ENCODE measurements at regions of chr12 and their contacts with region 1.

Region 1: DNA sequence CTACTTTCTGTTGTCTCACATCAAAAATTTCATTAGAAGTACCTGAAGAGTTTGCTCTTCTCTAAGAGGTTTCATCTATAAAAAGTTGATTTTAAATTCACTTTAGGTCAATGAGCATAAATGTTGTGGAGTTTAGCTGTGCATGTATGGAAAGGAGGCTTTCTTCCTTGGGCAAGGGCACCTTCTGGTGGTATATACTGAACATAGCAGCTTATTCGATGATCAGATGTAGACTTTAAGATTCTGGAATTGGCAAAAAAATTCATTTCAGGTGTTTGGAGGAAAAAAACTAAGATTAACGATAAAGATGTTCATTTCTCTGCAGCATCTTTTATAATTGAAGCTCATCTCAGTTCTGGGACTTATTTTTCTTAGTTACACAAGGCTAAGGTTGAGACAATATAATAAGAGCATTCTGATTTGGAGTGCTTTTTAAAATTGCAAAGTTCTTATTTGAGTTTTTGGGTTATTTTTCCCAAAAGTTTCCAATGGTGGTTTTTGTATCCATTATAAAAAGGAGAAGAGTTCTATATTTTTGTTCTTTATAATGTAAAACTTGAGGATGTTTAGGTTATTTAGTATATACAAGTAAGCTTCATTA is 46.8 kb downstream of the TMEM117 start:
- DNase-seq: peak; percentile 56
- H3K4me3 ChIP-seq: no peak overlapping the region; a peak in 1 of 4 replicates
- H3K27ac ChIP-seq: peak overlapping the region in 1 of 2 experiments; percentile 61; a peak in 1 of 4 replicates
- H3K4me1 ChIP-seq: no peaks in the 10 kb centered on the region; a peak in 1 of 4 replicates
- H3K27me3 ChIP-seq: no peaks in the 10 kb centered on the region
- CTCF ChIP-seq: peak; percentile 91
- EP300 ChIP-seq: no peak
- RAD21 ChIP-seq: peak; percentile 99

Region 2: DNA sequence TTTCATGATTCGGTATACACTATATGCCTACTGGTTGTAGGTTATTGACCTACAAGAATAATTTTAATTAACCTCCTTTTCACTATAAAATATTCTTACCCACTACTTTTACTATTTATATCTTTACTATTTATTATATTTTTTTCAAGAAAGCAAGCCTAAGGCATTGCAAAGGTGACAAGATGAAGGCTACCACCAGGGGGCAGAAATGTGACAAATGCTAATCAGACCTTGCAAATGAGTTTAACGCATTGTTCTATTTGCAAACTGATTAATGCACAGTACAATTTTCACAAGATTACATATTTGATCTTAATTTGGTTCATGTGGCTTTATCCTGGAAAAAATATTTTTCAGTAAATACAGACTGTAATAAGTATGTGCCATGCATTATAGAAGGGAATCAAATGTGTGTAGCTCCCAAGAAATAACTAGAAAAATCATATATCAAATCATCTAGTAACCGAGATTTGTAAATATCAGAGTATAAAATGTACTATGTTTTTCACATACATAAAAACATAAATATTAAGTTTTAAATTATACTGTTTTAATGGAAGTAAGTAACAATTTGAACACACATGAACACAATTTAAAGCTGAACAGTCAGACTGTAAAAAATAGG is 437.6 kb before region 1 on chr12:
- CTCF ChIA-PET with region 1: interaction called, 12 read pairs
- POLR2A ChIA-PET with region 1: no interaction called
- DNase-seq: peak; percentile 10
- H3K4me3 ChIP-seq: no peak overlapping the region
- H3K27ac ChIP-seq: no peak overlapping the region
- H3K4me1 ChIP-seq: no peaks in the 10 kb centered on the region; a peak in 1 of 4 replicates
- H3K27me3 ChIP-seq: no peaks in the 10 kb centered on the region
- CTCF ChIP-seq: peak; percentile 88
- EP300 ChIP-seq: no peak
- RAD21 ChIP-seq: peak; percentile 61

Region 3: DNA sequence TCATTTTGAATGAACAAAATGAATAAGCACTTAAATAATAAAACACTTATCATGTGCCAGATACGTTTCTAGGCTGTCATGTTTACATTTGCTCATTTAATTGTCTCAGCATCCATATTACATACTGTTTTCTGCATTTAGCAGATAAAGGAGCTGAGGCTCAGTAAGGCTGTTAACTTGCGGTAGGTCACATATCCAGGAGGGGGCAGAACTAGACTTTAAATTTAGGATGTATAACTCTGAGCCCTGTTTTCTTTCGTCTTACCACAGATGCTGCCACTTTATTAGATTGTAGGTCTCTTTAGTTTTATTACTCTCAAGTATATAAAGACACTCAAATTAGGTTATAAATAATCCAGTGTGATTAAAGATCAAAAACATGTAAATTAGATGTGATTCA is 106.2 kb before region 1 on chr12:
- CTCF ChIA-PET with region 1: interaction called, 87 read pairs
- POLR2A ChIA-PET with region 1: no interaction called
- DNase-seq: peak; percentile 61
- H3K4me3 ChIP-seq: no peak overlapping the region
- H3K27ac ChIP-seq: no peak overlapping the region
- H3K4me1 ChIP-seq: no peaks in the 10 kb centered on the region
- H3K27me3 ChIP-seq: no peaks in the 10 kb centered on the region
- CTCF ChIP-seq: peak; percentile 61
- EP300 ChIP-seq: no peak
- RAD21 ChIP-seq: peak; percentile 72

Region 4: GRCh38 chr12:43795716-43796288 is 86.9 kb before region 1 on chr12:
- CTCF ChIA-PET with region 1: interaction called, 15 read pairs
- POLR2A ChIA-PET with region 1: no interaction called
- DNase-seq: no peak
- H3K4me3 ChIP-seq: no peak overlapping the region
- H3K27ac ChIP-seq: peak overlapping the region in 1 of 2 experiments; percentile 21; a peak in 1 of 4 replicates
- H3K4me1 ChIP-seq: no peaks in the 10 kb centered on the region
- H3K27me3 ChIP-seq: no peaks in the 10 kb centered on the region
- CTCF ChIP-seq: no peak
- EP300 ChIP-seq: no peak
- RAD21 ChIP-seq: no peak

Region 5: DNA sequence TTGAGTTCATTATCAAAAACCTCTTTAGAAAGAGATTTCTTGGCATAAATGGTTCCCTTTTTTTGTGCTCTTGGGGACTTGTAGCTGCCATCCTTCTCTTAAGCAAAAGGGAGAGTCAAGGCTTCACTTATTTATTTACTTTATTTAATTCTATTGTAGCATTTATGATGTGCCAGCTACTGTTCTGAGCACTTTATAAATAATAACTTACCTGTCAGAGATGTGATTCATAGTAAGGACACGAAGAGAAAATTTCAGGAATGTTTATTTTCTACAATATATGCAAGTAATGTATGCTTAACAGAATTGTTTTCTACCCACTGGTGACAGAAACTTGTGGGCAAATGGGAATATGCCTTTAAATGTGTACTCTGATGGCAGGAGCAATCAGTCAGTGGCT is 13.5 kb before region 1 on chr12:
- CTCF ChIA-PET with region 1: interaction called, 19 read pairs
- POLR2A ChIA-PET with region 1: no interaction called
- DNase-seq: no peak
- H3K4me3 ChIP-seq: no peak overlapping the region
- H3K27ac ChIP-seq: no peak overlapping the region
- H3K4me1 ChIP-seq: no peaks in the 10 kb centered on the region
- H3K27me3 ChIP-seq: no peaks in the 10 kb centered on the region
- CTCF ChIP-seq: no peak
- EP300 ChIP-seq: no peak
- RAD21 ChIP-seq: no peak

Region 6: DNA sequence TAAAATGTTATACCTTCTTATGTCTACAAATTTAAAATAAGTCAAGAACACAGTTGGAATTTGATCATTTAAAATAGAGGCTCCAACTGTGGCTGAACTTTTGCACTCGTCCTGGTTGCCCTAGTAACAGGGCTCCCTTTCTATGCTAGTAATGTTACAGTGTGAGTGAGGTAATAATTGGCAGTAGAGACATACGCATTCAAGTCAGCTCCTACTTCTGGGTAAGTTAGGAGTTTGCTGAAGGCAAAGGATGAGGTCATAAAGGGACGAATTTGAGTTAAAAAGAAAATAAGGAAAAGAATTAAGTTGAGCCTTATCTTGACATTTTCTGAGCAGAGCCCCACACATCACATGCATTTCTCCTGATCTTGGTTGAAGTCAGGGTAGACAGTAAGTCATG is 82.3 kb after region 1 on chr12:
- CTCF ChIA-PET with region 1: no interaction called
- POLR2A ChIA-PET with region 1: no interaction called
- DNase-seq: no peak
- H3K4me3 ChIP-seq: no peak overlapping the region
- H3K27ac ChIP-seq: no peak overlapping the region
- H3K4me1 ChIP-seq: peaks cover 2 to 6% of the 10 kb centered on the region in 2 experiments; a peak in 2 of 4 replicates
- H3K27me3 ChIP-seq: no peaks in the 10 kb centered on the region
- CTCF ChIP-seq: no peak
- EP300 ChIP-seq: no peak
- RAD21 ChIP-seq: no peak

Region 7: GRCh38 chr12:44000309-44000952 is 117.8 kb after region 1 on chr12:
- CTCF ChIA-PET with region 1: no interaction called
- POLR2A ChIA-PET with region 1: no interaction called
- DNase-seq: peak; percentile 11
- H3K4me3 ChIP-seq: no peak overlapping the region
- H3K27ac ChIP-seq: no peak overlapping the region
- H3K4me1 ChIP-seq: no peaks in the 10 kb centered on the region; a peak in 1 of 4 replicates
- H3K27me3 ChIP-seq: no peaks in the 10 kb centered on the region
- CTCF ChIP-seq: peak; percentile 59
- EP300 ChIP-seq: no peak
- RAD21 ChIP-seq: peak; percentile 42

Measured in SK-N-SH (cell line).